HCT116 (cell line): ENCODE measurements at regions of chr13 and their contacts with region 1.

Region 1: GRCh38 chr13:20924758-20925394 is 22.3 kb upstream of the XPO4 start:
- DNase-seq: peak; percentile 70
- ATAC-seq: peak; percentile 81
- H3K4me3 ChIP-seq: no peak overlapping the region
- H3K27ac ChIP-seq: no peak overlapping the region
- H3K4me1 ChIP-seq: no peaks in the 10 kb centered on the region
- H3K27me3 ChIP-seq: no peaks in the 10 kb centered on the region
- CTCF ChIP-seq: peak; percentile 77 to 92 (median 83)
- POLR2A ChIP-seq: no peak
- RAD21 ChIP-seq: peak; percentile 80

Region 2: GRCh38 chr13:20182231-20182846 is 742.5 kb before region 1 on chr13:
- CTCF ChIA-PET with region 1: interaction called, 6 read pairs
- POLR2A ChIA-PET with region 1: no interaction called
- RAD21 ChIA-PET with region 1: no interaction called
- intact Hi-C with region 1: loop called (anchors 2 kb)
- DNase-seq: peak; percentile 57
- ATAC-seq: peak; percentile 99
- H3K4me3 ChIP-seq: no peak overlapping the region
- H3K27ac ChIP-seq: no peak overlapping the region
- H3K4me1 ChIP-seq: peaks cover 0 to 3% of the 10 kb centered on the region in 2 experiments; a peak in 1 of 4 replicates
- H3K27me3 ChIP-seq: no peaks in the 10 kb centered on the region
- CTCF ChIP-seq: peak; percentile 65 to 83 (median 79); a peak in 5 of 6 replicates
- POLR2A ChIP-seq: no peak
- RAD21 ChIP-seq: peak; percentile 80

Region 3: GRCh38 chr13:20495082-20496023 is 429.5 kb before region 1 on chr13:
- CTCF ChIA-PET with region 1: interaction called, 40 read pairs
- POLR2A ChIA-PET with region 1: no interaction called
- RAD21 ChIA-PET with region 1: interaction called, 4 to 6 read pairs
- intact Hi-C with region 1: loop called (anchors 1 kb)
- DNase-seq: peak; percentile 50
- ATAC-seq: peak; percentile 79
- H3K4me3 ChIP-seq: no peak overlapping the region
- H3K27ac ChIP-seq: 0 out of 2 replicates have a peak overlapping the region, but pooled peaks have one; percentile 7
- H3K4me1 ChIP-seq: peaks cover 0 to 5% of the 10 kb centered on the region in 2 experiments; a peak in 1 of 4 replicates
- H3K27me3 ChIP-seq: no peaks in the 10 kb centered on the region
- CTCF ChIP-seq: peak; percentile 71 to 98 (median 93); a peak in 5 of 6 replicates
- POLR2A ChIP-seq: no peak
- RAD21 ChIP-seq: peak; percentile 85

Region 4: DNA sequence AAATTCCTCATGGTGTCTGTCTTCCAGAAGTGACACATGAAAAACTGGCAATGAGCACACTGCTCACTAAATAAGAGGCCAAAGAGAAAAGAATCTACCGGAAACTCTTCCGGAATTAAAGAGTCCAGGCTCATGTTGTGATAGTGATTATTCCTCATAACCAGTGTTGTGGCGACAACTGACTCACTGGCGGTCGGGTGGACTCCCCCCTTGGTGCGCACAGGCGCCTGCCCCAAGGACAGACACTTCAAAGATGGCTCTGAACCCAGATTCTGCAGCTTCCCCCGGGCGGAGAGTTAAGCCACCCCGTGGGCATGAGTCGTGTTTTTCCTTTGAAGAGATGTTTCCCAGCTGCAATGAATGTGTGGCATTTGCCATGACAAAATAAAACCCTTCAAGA is 211.1 kb before region 1 on chr13:
- CTCF ChIA-PET with region 1: interaction called, 3 read pairs
- POLR2A ChIA-PET with region 1: no interaction called
- RAD21 ChIA-PET with region 1: no interaction called
- intact Hi-C with region 1: loop called (anchors 2 kb)
- DNase-seq: no peak
- ATAC-seq: no peak
- H3K4me3 ChIP-seq: no peak overlapping the region
- H3K27ac ChIP-seq: no peak overlapping the region
- H3K4me1 ChIP-seq: peaks cover 0 to 23% of the 10 kb centered on the region in 2 experiments; a peak in 3 of 4 replicates
- H3K27me3 ChIP-seq: no peaks in the 10 kb centered on the region
- CTCF ChIP-seq: no peak
- POLR2A ChIP-seq: no peak
- RAD21 ChIP-seq: no peak

Region 5: DNA sequence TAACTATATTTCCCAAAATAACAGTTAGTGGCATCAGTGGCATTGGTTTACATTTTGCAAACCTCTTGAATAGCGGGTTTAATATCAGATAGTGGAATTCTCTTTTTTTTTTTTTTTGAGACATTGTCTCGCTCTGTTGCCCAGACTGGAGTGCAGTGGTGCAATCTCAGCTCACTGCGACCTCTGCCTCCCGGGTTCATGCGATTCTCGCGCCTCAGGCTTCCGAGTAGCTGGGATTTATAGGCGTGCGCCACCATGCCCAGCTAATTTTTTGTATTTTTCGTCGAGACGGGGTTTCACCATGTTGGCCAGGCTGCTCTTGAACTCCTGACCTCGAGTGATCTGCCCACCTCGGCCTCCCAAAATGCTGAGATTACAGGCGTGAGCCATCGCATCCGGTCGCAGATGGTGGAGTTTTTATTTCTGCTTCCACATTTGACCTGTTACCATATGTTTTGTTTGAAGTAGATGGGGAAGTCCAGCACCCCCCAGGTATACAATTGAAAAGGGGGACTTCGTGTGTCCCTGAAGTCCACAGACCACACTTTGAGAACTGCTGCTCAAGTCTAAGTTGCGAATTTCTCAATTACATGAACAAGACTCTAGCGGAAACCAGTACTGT is 18.2 kb after region 1 on chr13:
- CTCF ChIA-PET with region 1: interaction called, 11 read pairs
- POLR2A ChIA-PET with region 1: no interaction called
- RAD21 ChIA-PET with region 1: no interaction called
- intact Hi-C with region 1: no loop called
- DNase-seq: no peak
- ATAC-seq: no peak
- H3K4me3 ChIP-seq: no peak overlapping the region
- H3K27ac ChIP-seq: no peak overlapping the region
- H3K4me1 ChIP-seq: peaks cover 0 to 8% of the 10 kb centered on the region in 2 experiments; a peak in 2 of 4 replicates
- H3K27me3 ChIP-seq: no peaks in the 10 kb centered on the region
- CTCF ChIP-seq: no peak
- POLR2A ChIP-seq: no peak
- RAD21 ChIP-seq: no peak

Region 6: DNA sequence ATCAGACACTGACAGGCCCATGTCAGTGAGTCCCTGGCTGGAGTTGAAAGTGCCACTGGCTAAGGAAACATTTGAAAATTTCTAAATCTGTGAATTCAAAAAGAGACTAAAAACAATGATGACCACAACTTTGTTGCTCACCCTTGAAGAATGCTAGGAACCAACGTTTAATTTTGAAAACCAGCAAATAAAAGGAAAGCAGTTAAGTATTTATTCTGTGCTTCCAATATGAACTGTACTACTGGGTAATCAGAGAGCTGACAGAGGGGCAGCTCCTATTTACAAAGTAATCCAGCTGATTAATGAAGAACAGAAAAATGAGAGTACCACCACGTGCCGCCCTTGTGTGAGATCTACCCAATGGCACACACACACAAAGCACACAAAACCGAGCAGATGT is 181.2 kb after region 1 on chr13:
- CTCF ChIA-PET with region 1: no interaction called
- POLR2A ChIA-PET with region 1: no interaction called
- RAD21 ChIA-PET with region 1: no interaction called
- intact Hi-C with region 1: no loop called
- DNase-seq: no peak
- ATAC-seq: no peak
- H3K4me3 ChIP-seq: no peak overlapping the region
- H3K27ac ChIP-seq: no peak overlapping the region
- H3K4me1 ChIP-seq: peaks cover 0 to 3% of the 10 kb centered on the region in 2 experiments; a peak in 1 of 4 replicates
- H3K27me3 ChIP-seq: no peaks in the 10 kb centered on the region
- CTCF ChIP-seq: no peak
- POLR2A ChIP-seq: no peak
- RAD21 ChIP-seq: no peak